Activated naive CD4-positive, alpha-beta T cell treated with anti-CD3 and anti-CD28 coated beads for 36 hours (primary cell): ENCODE measurements at regions of chrX and their contacts with region 1.

Region 1: DNA sequence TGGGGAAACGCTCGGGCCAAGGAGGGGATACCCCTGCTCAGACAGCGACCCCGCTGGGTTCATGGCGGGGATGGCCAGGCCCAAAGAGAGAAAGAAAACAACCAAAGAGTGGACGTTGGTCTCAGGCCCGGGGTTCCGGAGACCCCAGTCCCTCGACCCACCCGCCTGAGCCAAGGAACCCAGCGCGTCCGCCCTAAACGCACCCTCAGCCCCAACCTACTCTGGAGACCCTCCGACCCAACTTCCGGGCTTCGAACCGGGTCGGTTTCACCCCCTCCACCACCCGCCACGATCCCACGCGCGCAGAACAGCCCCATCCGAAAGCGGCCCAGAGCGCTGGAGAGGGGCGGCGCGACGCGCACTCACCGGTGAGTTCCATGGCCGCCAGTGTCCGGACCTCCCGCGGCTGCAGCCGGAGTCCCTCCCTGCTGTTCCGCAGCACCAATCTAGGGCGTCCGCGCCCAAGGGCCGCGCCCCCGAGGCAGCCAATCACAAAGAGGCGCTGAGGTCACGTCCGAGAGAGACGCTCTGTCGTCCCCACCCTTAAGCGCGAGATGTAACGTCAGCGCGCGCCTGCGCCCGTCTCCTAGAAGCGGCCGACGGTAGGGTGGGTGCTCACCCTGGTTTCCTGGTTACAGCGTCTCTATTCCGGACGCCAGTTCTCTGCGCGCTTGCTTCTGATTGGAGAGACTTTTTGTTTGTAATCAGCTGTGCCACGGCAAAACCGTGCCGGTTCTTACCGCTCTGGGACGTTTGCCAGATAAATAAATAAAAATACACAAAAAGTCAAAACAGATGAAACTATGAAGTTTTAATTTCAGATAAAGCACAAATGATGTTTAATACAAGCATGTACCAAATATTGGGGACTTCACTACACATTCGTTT is at the start of gene PIGA:
- DNase-seq: peak; percentile 94
- H3K4me3 Mint-ChIP-seq: peak within 1 kb of the TSS; percentile 89
- H3K27ac Mint-ChIP-seq: peak within 1 kb of the TSS; percentile 87
- H3K4me1 Mint-ChIP-seq: peaks cover 12% of the 10 kb centered on the region
- H3K27me3 Mint-ChIP-seq: no peaks in the 10 kb centered on the region
- total RNA-seq, gene PIGA: 26.8 to 28.4 TPM

Region 2: GRCh38 chrX:15158736-15159406 is 176.5 kb before region 1 on chrX:
- CTCF ChIA-PET with region 1: no interaction called
- intact Hi-C with region 1: loop called (anchors 1 kb)
- DNase-seq: peak; percentile 51
- H3K4me3 Mint-ChIP-seq: peak overlapping the region; percentile 54
- H3K27ac Mint-ChIP-seq: peak overlapping the region; percentile 53
- H3K4me1 Mint-ChIP-seq: peaks cover 35% of the 10 kb centered on the region
- H3K27me3 Mint-ChIP-seq: no peaks in the 10 kb centered on the region

Region 3: GRCh38 chrX:15349046-15349445 is 13.7 kb after region 1 on chrX:
- CTCF ChIA-PET with region 1: interaction called, 11 read pairs
- intact Hi-C with region 1: no loop called
- DNase-seq: peak; percentile 17
- H3K4me3 Mint-ChIP-seq: no peak overlapping the region
- H3K27ac Mint-ChIP-seq: no peak overlapping the region
- H3K4me1 Mint-ChIP-seq: no peaks in the 10 kb centered on the region
- H3K27me3 Mint-ChIP-seq: peaks cover 2% of the 10 kb centered on the region

Region 4: GRCh38 chrX:15737960-15738902 is 402.9 kb after region 1 on chrX and contains the start of gene CA5B:
- CTCF ChIA-PET with region 1: no interaction called
- intact Hi-C with region 1: loop called (anchors 5 kb)
- DNase-seq: peak; percentile 96
- H3K4me3 Mint-ChIP-seq: peak within 1 kb of the TSS; percentile 83
- H3K27ac Mint-ChIP-seq: no peak within 1 kb of the TSS
- H3K4me1 Mint-ChIP-seq: peaks cover 37% of the 10 kb centered on the region
- H3K27me3 Mint-ChIP-seq: no peaks in the 10 kb centered on the region
- total RNA-seq, gene CA5B: 7.0 to 9.5 TPM

Region 5: DNA sequence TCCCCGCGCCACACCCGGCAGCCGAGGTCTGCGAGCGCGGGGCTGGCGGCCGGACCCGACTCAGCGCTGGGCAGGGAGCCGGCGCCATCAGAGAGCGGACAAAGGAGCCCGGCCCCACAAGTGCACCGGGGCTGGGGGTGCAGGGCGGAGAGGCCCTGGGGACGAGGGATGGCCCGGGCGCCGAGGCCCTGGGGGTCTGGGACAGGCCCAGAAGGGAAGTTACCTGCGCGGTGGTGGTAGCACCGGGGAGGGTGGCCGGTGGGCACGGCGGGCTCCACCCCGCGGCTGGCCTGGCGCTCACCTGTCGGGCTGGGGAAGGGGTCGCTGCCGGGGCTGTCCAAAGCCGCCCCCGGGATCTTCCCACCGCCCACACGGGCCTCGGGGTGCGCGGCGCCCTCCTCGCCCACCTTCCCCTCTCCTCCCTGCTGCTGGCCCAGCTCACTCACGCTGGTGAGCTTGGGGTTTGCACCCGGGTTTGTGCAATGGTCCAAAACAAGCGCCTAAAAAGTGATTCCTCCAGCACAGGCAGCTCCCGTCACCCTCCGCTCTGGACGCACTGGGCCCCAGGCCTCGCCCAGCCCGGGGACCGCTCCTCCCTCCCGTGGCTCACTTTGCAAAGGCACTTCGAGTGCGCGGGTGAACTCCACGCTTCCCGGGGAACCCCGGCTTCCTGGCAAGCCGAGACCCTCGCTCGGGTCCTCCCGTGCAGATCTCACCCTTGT is 1376.9 kb after region 1 on chrX and contains the start of gene CTPS2:
- CTCF ChIA-PET with region 1: no interaction called
- intact Hi-C with region 1: loop called (anchors 5 kb)
- DNase-seq: peak; percentile 63
- H3K4me3 Mint-ChIP-seq: peak within 1 kb of the TSS; percentile 83
- H3K27ac Mint-ChIP-seq: peak within 1 kb of the TSS; percentile 74
- H3K4me1 Mint-ChIP-seq: peaks cover 9% of the 10 kb centered on the region
- H3K27me3 Mint-ChIP-seq: no peaks in the 10 kb centered on the region
- total RNA-seq, gene CTPS2: 5.6 to 6.8 TPM